Activated B cell treated with CpG ODN at 0.5 μM for 24 hours (primary cell): ENCODE measurements at regions of chr12 and their contacts with region 1.

Region 1: DNA sequence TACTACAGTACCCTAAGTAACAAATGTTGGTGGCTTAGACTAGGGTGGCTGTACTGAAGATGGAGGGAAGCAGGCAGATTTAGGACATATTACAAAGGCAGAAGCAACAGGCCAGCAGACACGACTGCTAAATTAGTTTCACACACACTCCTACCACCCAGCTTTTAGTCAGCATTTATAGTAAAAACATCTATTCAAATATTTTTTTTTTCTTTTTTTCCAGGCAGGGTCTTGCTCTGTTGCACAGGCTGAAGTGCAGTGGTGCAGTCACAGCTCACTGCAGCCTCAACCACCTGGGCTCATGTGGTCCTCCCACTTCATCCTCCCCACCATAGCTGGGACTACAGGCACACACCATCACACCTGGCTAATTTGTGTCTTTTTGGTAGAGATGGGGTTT is 72.9 kb downstream of the CDK17 start:
- DNase-seq: no peak
- ATAC-seq: peak; percentile 85
- H3K4me3 Mint-ChIP-seq: peak overlapping the region; percentile 6
- H3K27ac Mint-ChIP-seq: peak overlapping the region; percentile 77
- H3K4me1 Mint-ChIP-seq: peaks cover 50% of the 10 kb centered on the region
- H3K27me3 Mint-ChIP-seq: no peaks in the 10 kb centered on the region
- CTCF ChIP-seq: no peak

Region 2: DNA sequence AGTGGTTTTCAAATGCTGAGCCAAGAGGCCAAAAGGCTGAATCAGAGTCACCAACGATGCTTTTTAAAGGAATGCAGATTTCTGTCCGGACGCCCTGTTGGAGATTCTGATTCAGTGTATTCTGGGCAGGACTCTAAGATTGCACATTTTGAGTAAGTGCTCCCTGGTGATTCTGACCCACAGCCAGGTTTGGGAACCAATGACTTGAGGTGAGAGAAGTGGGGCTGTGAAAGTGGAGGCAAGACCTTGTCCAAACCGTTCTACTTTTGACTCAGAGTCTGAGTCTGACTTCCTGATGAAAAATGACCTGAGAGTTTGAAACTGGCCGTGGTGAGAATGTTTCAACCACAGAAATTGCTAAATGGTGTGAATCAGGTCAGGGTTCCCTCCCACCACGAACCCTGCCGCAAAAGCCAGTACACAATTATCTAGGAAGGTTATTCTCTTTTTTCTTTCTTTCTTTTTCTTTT is 627.0 kb before region 1 on chr12:
- CTCF ChIA-PET with region 1: no interaction called
- POLR2A ChIA-PET with region 1: no interaction called
- intact Hi-C with region 1: no loop called
- DNase-seq: no peak
- ATAC-seq: peak; percentile 37
- H3K4me3 Mint-ChIP-seq: no peak overlapping the region
- H3K27ac Mint-ChIP-seq: no peak overlapping the region
- H3K4me1 Mint-ChIP-seq: peaks cover 12% of the 10 kb centered on the region
- H3K27me3 Mint-ChIP-seq: peaks cover 17% of the 10 kb centered on the region
- CTCF ChIP-seq: no peak

Region 3: DNA sequence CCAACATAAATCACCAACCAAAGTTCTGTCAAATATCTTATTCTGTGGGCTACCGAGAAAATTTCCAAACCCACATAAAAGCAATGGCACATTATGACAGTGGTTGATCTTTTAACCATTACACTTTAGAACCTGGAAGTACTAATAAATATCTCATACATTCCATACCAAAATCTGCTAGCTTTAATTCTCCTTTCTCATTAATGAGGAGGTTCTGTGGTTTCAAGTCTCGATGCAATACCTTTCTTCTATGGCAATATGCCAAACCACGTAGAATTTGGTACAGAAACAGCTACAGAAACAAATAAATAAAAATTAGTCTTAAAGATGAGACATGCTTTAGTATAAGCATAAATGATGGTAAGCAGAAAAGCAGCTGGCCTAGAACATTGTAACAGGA is 32.5 kb before region 1 on chr12:
- CTCF ChIA-PET with region 1: no interaction called
- POLR2A ChIA-PET with region 1: no interaction called
- intact Hi-C with region 1: loop called (anchors 5 kb)
- DNase-seq: no peak
- ATAC-seq: no peak
- H3K4me3 Mint-ChIP-seq: no peak overlapping the region
- H3K27ac Mint-ChIP-seq: no peak overlapping the region
- H3K4me1 Mint-ChIP-seq: peaks cover 2% of the 10 kb centered on the region
- H3K27me3 Mint-ChIP-seq: no peaks in the 10 kb centered on the region
- CTCF ChIP-seq: no peak

Region 4: DNA sequence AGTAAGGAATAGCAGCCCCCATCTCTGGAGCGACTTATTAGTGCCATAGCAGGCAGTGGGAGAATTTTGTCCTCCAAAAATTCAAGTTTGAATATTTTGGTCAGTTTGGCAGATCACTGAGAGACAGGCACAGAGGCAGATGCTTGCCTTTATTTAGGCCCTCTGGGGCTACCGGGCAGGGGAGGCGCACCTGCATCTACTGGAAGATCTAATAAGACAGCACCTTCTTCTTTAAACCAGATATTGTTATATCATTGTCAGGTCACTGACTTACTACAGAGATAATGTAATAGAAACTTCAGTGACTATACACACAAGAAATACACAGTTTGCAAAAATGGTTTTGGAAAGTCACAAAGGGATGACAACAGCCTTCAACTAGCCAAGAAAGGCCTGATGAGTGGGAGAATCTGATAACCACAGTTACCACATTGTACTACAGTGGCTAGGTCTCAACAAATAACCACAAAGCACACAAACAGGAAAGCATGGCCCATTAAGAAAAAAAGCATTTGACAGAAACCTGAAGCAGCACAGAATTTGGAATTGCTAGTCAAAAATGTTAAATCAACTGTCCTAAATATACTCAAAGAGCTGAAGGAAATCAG is 16.1 kb after region 1 on chr12:
- CTCF ChIA-PET with region 1: interaction called, 3 read pairs
- POLR2A ChIA-PET with region 1: no interaction called
- intact Hi-C with region 1: loop called (anchors 2 kb)
- DNase-seq: no peak
- ATAC-seq: no peak
- H3K4me3 Mint-ChIP-seq: no peak overlapping the region
- H3K27ac Mint-ChIP-seq: no peak overlapping the region
- H3K4me1 Mint-ChIP-seq: peaks cover 42% of the 10 kb centered on the region
- H3K27me3 Mint-ChIP-seq: no peaks in the 10 kb centered on the region
- CTCF ChIP-seq: no peak